ENCODE measurements at regions of chr12 and their contacts with region 1.

Region 1: DNA sequence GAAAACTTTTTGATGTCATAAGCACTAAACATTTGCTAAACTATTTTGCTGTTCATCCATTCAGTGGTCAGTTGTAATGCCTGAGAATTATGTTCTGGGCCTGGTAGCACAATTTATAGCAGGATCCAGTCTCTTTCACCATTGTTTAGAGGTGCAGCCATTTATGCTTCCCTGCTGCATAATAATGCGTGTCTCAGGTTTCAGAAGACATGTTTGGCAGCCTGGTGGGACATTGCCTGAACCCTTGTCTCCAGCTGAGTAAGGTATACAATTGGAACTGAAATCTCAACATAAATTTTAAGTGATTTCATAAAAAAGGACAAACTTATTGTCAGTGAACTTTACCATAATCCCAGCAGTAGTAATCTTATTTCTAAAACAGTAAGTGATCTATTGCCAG is 94.8 kb downstream of the POLR3B start:
- DNase-seq: no peak
- ATAC-seq: no peak
- H3K4me3 ChIP-seq: no peak overlapping the region
- H3K4me3 Mint-ChIP-seq: no peak overlapping the region
- H3K27ac ChIP-seq: no peak overlapping the region
- H3K27ac Mint-ChIP-seq: no peak overlapping the region
- H3K4me1 ChIP-seq: no peaks in the 10 kb centered on the region
- H3K4me1 Mint-ChIP-seq: no peaks in the 10 kb centered on the region
- H3K27me3 ChIP-seq: no peaks in the 10 kb centered on the region
- H3K27me3 Mint-ChIP-seq: no peaks in the 10 kb centered on the region

Region 2: DNA sequence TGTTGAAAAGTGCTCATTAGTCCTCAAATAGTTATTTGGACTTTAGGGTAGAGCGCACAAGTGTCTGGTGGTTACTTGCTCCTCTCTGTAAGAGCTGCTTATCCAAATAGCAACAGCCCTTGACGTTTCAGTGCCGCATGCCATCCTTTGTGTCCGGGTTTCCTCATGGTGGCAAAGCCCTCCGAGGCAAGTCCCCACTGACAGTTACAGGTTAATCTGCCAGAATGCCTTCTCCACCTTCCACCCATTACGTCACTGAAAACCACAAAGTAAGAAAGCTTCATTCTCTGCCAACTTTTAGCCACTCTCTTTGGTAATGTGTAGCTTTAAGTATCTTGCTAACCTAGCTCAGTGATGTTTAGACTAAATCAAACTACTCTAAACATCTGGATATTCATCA is 16.1 kb before region 1 on chr12:
- CTCF ChIA-PET with region 1: no interaction called
- POLR2A ChIA-PET with region 1: no interaction called
- DNase-seq: no peak
- ATAC-seq: no peak
- H3K4me3 ChIP-seq: no peak overlapping the region
- H3K4me3 Mint-ChIP-seq: no peak overlapping the region
- H3K27ac ChIP-seq: no peak overlapping the region
- H3K27ac Mint-ChIP-seq: no peak overlapping the region
- H3K4me1 ChIP-seq: no peaks in the 10 kb centered on the region
- H3K4me1 Mint-ChIP-seq: no peaks in the 10 kb centered on the region
- H3K27me3 ChIP-seq: no peaks in the 10 kb centered on the region
- H3K27me3 Mint-ChIP-seq: no peaks in the 10 kb centered on the region

Region 3: DNA sequence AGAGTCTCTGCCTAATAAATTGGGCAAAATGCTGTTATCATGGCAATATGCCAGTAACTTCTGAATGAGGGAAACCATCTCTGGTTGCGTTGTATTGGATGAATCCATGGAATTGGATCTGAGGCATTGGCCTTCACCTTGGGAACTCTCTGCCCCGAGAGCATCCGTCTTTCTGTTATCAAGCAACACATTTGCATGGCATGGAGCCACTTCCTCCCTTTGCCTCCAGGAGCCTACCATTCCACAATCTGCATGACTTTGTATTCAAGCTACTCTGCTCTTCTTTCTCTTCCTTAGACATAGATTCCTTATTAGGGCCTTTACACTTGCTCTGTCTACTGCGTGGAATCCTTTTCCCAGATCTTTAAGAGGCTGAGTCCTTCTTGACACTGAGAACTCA is 379.4 kb after region 1 on chr12:
- CTCF ChIA-PET with region 1: no interaction called
- POLR2A ChIA-PET with region 1: interaction called in 1 of 2 experiments, 16 read pairs
- DNase-seq: no peak
- ATAC-seq: no peak
- H3K4me3 ChIP-seq: no peak overlapping the region
- H3K4me3 Mint-ChIP-seq: no peak overlapping the region
- H3K27ac ChIP-seq: no peak overlapping the region
- H3K27ac Mint-ChIP-seq: no peak overlapping the region
- H3K4me1 ChIP-seq: no peaks in the 10 kb centered on the region
- H3K4me1 Mint-ChIP-seq: peaks cover 0 to 10% (median 0%) of the 10 kb centered on the region in 3 donors
- H3K27me3 ChIP-seq: no peaks in the 10 kb centered on the region
- H3K27me3 Mint-ChIP-seq: no peaks in the 10 kb centered on the region

Region 4: DNA sequence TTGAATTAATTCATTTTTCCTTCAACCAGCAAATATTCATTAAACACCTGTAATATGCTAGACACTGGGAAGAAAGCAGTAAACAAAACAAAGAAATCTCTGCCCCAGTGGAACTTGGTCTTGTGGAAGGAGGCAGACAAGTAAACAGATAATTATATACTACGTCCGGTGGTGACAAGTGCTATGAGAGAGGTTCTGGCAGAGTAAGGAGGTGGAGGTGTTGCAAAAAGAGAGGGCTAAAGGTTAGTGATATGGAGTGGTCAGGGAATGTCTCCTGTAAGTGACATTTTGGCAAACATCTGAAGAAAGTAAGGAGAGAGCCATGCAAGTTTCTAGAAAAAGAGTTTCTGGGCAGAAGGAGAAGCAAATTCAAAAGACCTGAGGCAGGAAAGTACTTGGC is 395.5 kb after region 1 on chr12:
- CTCF ChIA-PET with region 1: no interaction called
- POLR2A ChIA-PET with region 1: no interaction called
- DNase-seq: no peak
- ATAC-seq: no peak
- H3K4me3 ChIP-seq: no peak overlapping the region
- H3K4me3 Mint-ChIP-seq: no peak overlapping the region
- H3K27ac ChIP-seq: no peak overlapping the region
- H3K27ac Mint-ChIP-seq: no peak overlapping the region
- H3K4me1 ChIP-seq: no peaks in the 10 kb centered on the region
- H3K4me1 Mint-ChIP-seq: no peaks in the 10 kb centered on the region
- H3K27me3 ChIP-seq: no peaks in the 10 kb centered on the region
- H3K27me3 Mint-ChIP-seq: no peaks in the 10 kb centered on the region